T-cell (primary cell): ENCODE measurements at regions of chr12 and their contacts with region 1.

Region 1: GRCh38 chr12:14365294-14366208 is at the start of gene ATF7IP:
- DNase-seq: peak; percentile 89 to 99 (median 96)
- ATAC-seq: peak; percentile 84 to 94 (median 92)
- H3K4me3 ChIP-seq: peak within 1 kb of the TSS; percentile 63 to 75
- H3K4me3 Mint-ChIP-seq: peak within 1 kb of the TSS; percentile 75 to 90 (median 85)
- H3K27ac ChIP-seq: peak within 1 kb of the TSS; percentile 97
- H3K27ac Mint-ChIP-seq: peak within 1 kb of the TSS; percentile 95 to 98
- H3K4me1 ChIP-seq: peaks cover 15 to 22% of the 10 kb centered on the region in 2 experiments
- H3K4me1 Mint-ChIP-seq: peaks cover 37 to 47% (median 44%) of the 10 kb centered on the region in 3 donors
- H3K27me3 ChIP-seq: no peaks in the 10 kb centered on the region
- H3K27me3 Mint-ChIP-seq: no peaks in the 10 kb centered on the region
- total RNA-seq, gene ATF7IP: 112 to 165 (median 147) TPM

Region 2: GRCh38 chr12:14257734-14258574 is 107.6 kb before region 1 on chr12:
- CTCF ChIA-PET with region 1: interaction called, 4 to 25 read pairs
- POLR2A ChIA-PET with region 1: interaction called, 5 read pairs
- DNase-seq: peak in 34 of 35 experiments; percentile 52 to 86 (median 75)
- ATAC-seq: peak; percentile 48 to 67 (median 53)
- H3K4me3 ChIP-seq: peak overlapping the region in 1 of 2 donors; percentile 2
- H3K4me3 Mint-ChIP-seq: peak overlapping the region; percentile 60 to 71 (median 60)
- H3K27ac ChIP-seq: peak overlapping the region; percentile 95
- H3K27ac Mint-ChIP-seq: peak overlapping the region; percentile 98
- H3K4me1 ChIP-seq: peaks cover 13 to 43% of the 10 kb centered on the region in 2 experiments
- H3K4me1 Mint-ChIP-seq: peaks cover 57 to 58% (median 57%) of the 10 kb centered on the region in 3 donors
- H3K27me3 ChIP-seq: no peaks in the 10 kb centered on the region
- H3K27me3 Mint-ChIP-seq: no peaks in the 10 kb centered on the region

Region 3: DNA sequence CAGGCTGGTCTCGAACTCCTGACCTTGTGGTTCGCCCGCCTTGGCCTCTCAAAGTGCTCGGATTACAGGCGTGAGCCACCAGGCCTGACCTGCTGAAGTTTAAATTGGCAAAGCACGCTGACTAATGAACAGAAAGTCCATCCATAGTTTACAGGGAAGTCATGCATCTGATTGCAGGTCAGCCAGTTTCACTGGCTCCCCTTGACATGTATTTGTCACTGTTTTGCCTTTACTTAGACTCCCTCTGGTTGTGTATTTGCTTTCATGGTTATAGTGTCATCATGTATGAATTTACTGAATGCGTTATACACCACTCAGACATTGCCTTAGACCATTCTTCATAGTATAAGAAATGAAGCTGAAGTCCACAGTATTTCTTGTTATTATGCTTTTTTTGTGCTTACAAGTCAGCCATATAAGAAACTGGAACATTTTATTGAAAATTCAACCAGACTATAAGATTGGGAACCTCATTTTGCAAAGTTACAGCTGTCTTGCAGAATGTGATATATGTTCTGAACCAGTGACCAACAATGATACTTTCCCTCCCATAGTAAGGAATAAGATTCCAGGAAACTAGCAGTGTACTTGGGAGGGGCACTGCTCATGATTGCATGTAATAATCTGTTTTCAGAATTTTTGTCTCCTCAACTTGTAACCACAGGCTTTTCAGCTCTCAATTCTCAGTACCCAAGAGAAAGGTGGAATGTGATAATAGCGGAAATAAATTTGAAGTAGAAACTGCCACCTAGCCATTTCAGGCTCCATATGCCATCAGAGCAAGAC is 52.0 kb before region 1 on chr12:
- CTCF ChIA-PET with region 1: no interaction called
- POLR2A ChIA-PET with region 1: no interaction called
- DNase-seq: no peak
- ATAC-seq: no peak
- H3K4me3 ChIP-seq: no peak overlapping the region
- H3K4me3 Mint-ChIP-seq: no peak overlapping the region
- H3K27ac ChIP-seq: no peak overlapping the region
- H3K27ac Mint-ChIP-seq: no peak overlapping the region
- H3K4me1 ChIP-seq: no peaks in the 10 kb centered on the region
- H3K4me1 Mint-ChIP-seq: no peaks in the 10 kb centered on the region
- H3K27me3 ChIP-seq: no peaks in the 10 kb centered on the region
- H3K27me3 Mint-ChIP-seq: no peaks in the 10 kb centered on the region

Region 4: DNA sequence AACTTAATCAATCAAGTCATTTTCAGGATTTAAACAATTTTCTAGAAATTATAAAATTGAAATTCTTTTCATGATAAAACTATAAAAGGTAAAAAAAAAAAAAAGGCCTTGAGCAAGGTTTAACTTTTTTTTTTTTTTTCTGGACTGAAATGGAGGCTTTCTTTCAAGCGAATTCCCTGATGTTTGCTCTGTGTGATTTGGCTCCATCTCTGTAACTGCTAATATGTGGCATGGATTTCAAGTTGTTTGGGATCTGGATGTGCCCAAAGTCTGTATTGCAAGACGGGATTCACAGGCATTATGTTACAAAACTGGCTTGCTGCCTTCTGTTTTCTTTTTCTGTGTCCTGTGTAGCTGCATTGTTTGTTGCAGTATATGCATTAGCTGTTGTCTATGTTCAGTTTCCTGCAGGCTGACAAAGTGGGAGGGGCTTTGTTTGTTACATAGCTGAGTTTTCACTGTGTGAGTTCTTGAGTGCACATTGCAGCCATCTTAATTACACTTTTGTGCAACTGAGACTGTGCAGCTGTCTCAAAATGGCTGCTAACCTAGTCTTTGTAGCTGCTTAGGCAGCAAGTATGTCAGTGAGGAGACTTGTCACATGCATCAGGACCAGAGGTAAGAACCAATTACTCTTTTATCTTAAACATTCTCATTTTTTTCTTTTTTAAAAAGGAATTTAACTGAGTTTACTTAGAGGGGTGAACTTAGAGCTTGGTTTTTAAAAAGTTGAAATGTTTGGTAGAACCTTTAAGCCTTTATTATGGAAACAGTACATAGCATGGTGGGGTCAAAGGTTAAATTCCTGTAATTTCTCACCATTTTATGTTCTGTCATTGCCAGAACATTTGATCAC is 19.5 kb after region 1 on chr12:
- CTCF ChIA-PET with region 1: interaction called, 6 to 63 read pairs
- POLR2A ChIA-PET with region 1: interaction called, 14 to 56 read pairs
- DNase-seq: peak; percentile 18 to 87 (median 54)
- ATAC-seq: peak; percentile 88 to 93 (median 91)
- H3K4me3 ChIP-seq: peak overlapping the region; percentile 23 to 43
- H3K4me3 Mint-ChIP-seq: peak overlapping the region; percentile 58 to 75 (median 71)
- H3K27ac ChIP-seq: peak overlapping the region; percentile 86
- H3K27ac Mint-ChIP-seq: peak overlapping the region; percentile 89 to 92
- H3K4me1 ChIP-seq: peaks cover 27 to 45% of the 10 kb centered on the region in 2 experiments
- H3K4me1 Mint-ChIP-seq: peaks cover 60 to 68% (median 63%) of the 10 kb centered on the region in 3 donors
- H3K27me3 ChIP-seq: no peaks in the 10 kb centered on the region
- H3K27me3 Mint-ChIP-seq: no peaks in the 10 kb centered on the region

Region 5: GRCh38 chr12:14394317-14395073 is 28.9 kb after region 1 on chr12:
- CTCF ChIA-PET with region 1: interaction called, 3 to 54 read pairs
- POLR2A ChIA-PET with region 1: interaction called, 4 to 31 read pairs
- DNase-seq: peak in 21 of 35 experiments; percentile 13 to 81 (median 31)
- ATAC-seq: peak; percentile 65 to 81 (median 76)
- H3K4me3 ChIP-seq: peak overlapping the region in 1 of 2 donors; percentile 16
- H3K4me3 Mint-ChIP-seq: peak overlapping the region; percentile 58 to 82 (median 73)
- H3K27ac ChIP-seq: peak overlapping the region; percentile 73
- H3K27ac Mint-ChIP-seq: peak overlapping the region; percentile 92 to 96
- H3K4me1 ChIP-seq: peaks cover 32 to 47% of the 10 kb centered on the region in 2 experiments
- H3K4me1 Mint-ChIP-seq: peaks cover 86 to 91% (median 91%) of the 10 kb centered on the region in 3 donors
- H3K27me3 ChIP-seq: no peaks in the 10 kb centered on the region
- H3K27me3 Mint-ChIP-seq: no peaks in the 10 kb centered on the region

Region 6: DNA sequence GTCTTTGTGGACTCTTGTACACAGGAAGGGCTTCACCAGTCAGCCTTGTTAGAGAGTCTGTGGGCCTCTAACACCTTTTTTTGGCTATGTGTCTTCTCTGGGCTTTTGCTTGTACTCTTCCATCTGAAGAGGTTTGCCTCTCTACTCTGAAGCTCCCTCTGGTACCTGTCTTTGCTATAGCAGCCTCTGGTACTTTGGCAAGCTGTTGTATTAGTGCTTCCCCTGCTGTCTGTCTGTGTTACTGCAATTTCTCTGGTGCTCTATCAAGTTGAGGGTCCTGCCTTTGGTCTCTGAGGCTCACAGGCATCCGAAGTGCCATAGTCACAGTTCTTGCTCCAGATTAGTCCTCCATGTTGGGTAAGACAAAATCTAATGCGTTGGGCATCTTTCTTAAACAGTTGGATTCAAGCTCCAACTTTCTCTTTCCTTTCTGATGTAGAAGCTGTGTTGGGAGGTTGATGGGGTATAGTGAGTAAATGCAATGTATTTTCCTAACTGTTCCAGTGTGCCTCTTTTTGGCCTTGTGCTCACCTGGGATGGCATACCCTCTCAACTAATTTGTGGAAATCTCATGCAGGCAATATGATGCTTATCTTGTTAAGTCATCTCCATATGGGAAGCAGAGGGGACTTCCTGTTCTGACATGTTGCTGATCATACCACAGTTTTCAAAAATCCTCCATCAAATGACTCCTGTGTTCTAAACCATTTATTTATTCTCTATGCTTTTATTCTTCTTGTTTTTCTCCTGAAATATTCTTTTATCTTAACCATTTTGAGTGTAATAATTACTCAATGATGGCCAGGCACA is 88.8 kb after region 1 on chr12:
- CTCF ChIA-PET with region 1: interaction called in 1 of 2 experiments, 12 read pairs
- POLR2A ChIA-PET with region 1: no interaction called
- DNase-seq: peak in 13 of 35 experiments; percentile 1 to 58 (median 13)
- ATAC-seq: peak; percentile 52 to 74 (median 66)
- H3K4me3 ChIP-seq: no peak overlapping the region
- H3K4me3 Mint-ChIP-seq: peak overlapping the region in 1 of 3 donors; percentile 25
- H3K27ac ChIP-seq: peak overlapping the region; percentile 6
- H3K27ac Mint-ChIP-seq: peak overlapping the region; percentile 69 to 71
- H3K4me1 ChIP-seq: peaks cover 5 to 12% of the 10 kb centered on the region in 2 experiments
- H3K4me1 Mint-ChIP-seq: peaks cover 49 to 59% (median 59%) of the 10 kb centered on the region in 3 donors
- H3K27me3 ChIP-seq: no peaks in the 10 kb centered on the region
- H3K27me3 Mint-ChIP-seq: no peaks in the 10 kb centered on the region